Cardiac septum (tissue), 1 donor: ENCODE measurements at regions of chr15 and their contacts with region 1.

Region 1: DNA sequence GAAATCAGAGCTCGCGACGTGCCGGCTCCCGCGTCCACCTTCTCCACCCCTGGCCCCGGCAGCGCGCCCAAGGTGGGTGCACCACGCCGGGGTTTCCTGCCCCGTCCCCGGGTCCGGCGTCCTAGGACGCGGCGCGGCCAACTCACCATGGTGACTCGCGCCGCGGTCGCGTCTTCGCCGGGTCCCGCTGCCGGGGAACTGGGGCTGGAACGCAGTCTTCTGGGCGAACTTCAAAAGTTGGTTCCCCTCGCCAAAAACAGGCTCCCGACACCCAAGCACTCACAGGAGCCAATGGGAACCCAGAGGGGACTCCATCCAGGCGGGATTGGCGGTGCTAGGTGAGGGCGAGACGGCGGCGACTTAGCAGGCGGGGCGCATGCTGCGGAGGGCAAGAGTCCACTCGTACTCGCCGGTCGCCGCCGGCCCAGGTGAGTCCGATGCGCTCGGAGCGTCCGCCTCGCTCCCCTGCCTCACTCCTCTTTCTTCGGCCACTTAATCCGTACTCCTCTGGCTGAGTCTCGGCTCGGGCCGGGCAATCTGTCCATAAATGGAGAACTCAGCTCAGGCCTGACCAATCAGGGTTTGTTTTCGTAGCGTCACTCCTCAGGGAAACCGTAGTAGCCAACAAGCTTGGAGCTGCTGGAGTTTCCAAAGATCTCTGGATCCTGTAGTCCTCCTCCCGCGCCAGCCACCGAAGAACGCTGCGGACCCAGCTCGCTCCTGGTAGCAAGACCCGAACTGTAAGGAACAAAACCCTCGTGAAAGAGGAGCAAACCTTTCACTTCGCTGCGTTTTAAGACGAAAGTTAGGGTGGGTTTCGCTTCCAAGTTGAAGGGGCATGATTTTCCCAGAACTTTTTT is at the start of gene MYO1E:
- DNase-seq: peak; percentile 93
- total RNA-seq, gene MYO1E: 41.0 TPM

Region 2: GRCh38 chr15:59174835-59175831 is 197.4 kb before region 1 on chr15:
- intact Hi-C with region 1: loop called (anchors 5 kb)
- DNase-seq: no peak

Region 3: GRCh38 chr15:59247364-59247763 is 125.2 kb before region 1 on chr15:
- intact Hi-C with region 1: loop called (anchors 10 kb)
- DNase-seq: no peak

Region 4: DNA sequence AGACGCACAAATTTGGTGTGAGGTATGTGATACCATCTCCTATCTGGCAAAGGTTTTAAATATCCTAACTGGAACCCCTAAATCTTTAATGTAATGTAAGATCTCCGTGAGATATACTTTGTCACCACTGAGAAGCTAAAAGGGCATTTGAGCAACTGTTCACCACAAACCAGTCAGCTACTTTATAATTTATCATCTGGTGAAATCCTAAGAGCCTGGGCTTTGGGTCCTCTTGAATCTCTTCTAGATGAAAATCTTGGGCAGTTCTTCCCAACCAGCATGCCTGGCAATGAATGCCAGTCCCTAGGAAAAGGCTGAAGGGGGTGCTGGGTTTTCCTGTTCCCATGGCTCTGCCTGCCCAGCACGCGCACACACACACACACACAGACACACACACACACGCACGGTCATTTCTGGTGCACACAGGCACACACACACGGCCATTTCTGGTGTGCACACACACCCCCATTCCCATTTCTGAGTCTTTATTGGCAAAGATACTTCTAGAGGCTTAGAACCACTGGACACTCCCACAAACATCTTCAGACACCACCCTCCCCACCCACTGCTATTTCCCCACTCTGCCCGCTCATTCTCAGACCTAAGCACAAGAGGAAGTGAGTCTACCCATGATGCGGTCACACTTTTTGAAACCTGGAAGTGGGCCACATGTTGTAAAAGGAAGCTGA is 72.5 kb before region 1 on chr15:
- intact Hi-C with region 1: loop called (anchors 5 kb)
- DNase-seq: peak; percentile 88

Region 5: DNA sequence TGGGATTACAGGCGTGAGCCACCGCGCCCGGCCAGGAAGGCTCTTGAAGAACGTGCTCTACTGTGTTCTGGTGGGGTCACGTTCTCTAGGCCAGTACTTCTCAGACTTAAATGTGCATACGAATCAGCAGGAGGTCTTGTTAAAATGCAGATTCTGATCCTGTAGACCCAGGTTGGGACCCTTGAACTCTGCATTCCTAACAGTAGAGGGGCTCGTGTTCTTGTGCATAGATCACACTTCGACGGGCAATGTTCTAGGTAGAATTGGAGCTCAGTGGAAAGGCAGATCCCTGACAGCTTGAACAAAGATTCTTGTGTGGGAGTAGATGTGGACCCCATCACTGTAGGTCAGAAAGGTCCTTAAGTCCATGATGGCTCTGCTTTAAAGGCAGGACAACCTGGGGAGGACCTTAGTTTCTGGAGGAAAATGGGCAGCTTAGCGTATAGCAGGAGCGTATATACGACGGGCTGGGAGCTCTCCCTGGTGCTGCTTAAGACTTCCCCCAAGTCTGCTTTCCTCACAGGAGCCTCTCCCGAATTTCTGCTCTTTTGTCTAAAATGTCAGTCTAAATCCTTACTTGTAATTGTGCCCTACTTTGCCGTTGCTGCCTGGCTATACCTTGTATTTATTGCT is 48.5 kb after region 1 on chr15:
- intact Hi-C with region 1: no loop called
- DNase-seq: no peak

Region 6: DNA sequence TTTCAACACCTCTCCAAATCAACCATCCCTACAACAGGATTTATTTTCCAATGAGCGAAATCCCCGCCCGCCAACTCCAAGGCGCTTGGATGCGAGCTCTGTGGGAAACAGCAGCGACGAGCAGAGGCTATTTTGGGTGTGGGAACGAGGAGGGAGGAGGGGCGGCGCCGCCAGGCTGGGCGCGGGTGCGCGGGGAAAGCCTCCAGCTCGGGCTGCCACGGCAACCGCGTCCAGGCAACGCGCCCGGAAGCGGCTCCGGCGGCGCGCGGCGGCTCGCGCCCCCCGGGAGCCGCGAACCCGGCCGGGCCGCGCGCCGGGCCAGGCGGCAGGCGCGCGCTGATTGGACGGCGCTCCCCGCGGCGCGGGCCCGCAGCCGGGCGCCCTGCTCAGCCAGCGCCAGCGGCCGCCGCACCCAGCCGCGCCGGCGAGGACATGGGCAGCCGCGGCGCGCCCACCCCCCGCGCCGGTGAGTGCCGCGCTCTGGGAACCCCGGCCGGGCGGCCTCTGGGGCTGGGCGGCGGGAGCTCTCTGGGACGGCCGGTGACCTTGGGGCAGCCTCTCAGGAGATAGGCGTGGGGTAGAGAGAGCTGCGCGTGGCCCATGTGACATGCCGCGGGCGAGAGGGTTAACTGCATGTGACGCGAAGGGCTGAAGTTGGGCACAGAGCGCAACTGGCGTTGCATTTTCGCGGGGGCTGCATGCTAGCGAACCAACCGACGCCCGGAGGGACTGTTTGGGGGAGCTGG is 65.4 kb after region 1 on chr15 and contains the start of gene FAM81A:
- intact Hi-C with region 1: loop called (anchors 1 kb)
- DNase-seq: peak; percentile 92
- total RNA-seq, gene FAM81A: 1.8 TPM

Region 7: GRCh38 chr15:59492389-59493377 is 120.1 kb after region 1 on chr15:
- intact Hi-C with region 1: loop called (anchors 5 kb)
- DNase-seq: peak; percentile 83